ENCODE measurements at regions of chr5 and their contacts with region 1.

Region 1: DNA sequence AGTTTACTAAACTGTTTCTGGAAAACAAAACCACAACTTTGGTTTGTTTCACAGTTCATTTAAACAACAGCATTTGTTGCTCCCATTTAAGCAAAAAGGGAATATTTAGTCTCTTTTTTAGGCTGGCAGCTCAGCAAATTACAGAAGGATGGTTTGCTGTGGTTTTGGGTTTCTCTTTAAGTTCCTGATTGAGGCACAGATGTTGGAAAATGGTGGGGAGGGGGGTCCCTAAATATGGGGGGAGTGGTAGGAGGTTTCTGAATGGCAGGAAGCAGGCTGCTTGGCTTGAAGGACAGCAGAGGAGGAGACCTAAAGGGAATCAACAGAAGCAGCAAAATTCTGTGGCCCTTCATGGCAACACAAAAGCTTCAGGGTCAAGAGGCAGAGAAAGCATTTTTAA is 263.4 kb downstream of the ZSWIM6 start:
- DNase-seq: no peak
- H3K4me3 ChIP-seq: no peak overlapping the region
- H3K27ac ChIP-seq: no peak overlapping the region
- H3K4me1 ChIP-seq: 0 out of 2 replicates have a peak, but pooled peaks cover 7% of the 10 kb centered on the region
- H3K27me3 ChIP-seq: no peaks in the 10 kb centered on the region; the same call in 1 of the 2 replicates
- CTCF ChIP-seq: no peak

Region 2: GRCh38 chr5:61647672-61648071 is 52.2 kb after region 1 on chr5:
- CTCF ChIA-PET with region 1: no interaction called
- POLR2A ChIA-PET with region 1: interaction called, 14 read pairs
- intact Hi-C with region 1: no loop called
- DNase-seq: no peak
- H3K4me3 ChIP-seq: no peak overlapping the region
- H3K27ac ChIP-seq: no peak overlapping the region
- H3K4me1 ChIP-seq: no peaks in the 10 kb centered on the region
- H3K27me3 ChIP-seq: peaks cover 22% of the 10 kb centered on the region
- CTCF ChIP-seq: no peak

Region 3: DNA sequence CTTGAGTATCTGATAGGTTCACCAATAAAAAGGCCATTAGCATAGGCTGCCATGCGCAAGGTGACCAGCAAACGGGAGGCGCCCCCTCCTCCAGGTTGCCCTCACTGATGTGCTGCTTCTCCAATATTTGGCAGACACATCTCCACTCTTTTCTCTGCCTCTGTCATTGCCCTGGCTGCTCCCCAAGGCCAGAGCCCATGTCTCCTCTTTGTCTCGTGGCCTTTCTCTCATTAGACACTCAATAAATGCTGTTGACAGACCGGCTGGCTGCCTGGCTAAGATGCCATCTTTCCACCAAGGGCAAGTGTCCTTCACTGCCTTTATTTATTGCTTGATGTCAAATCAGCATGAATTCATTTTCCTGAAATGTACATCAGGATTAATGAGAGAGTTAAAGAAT is 306.6 kb after region 1 on chr5:
- CTCF ChIA-PET with region 1: no interaction called
- POLR2A ChIA-PET with region 1: no interaction called
- intact Hi-C with region 1: no loop called
- DNase-seq: no peak
- H3K4me3 ChIP-seq: no peak overlapping the region
- H3K27ac ChIP-seq: no peak overlapping the region
- H3K4me1 ChIP-seq: no peaks in the 10 kb centered on the region
- H3K27me3 ChIP-seq: no peaks in the 10 kb centered on the region
- CTCF ChIP-seq: no peak

Region 4: GRCh38 chr5:61981886-61982285 is 386.5 kb after region 1 on chr5:
- CTCF ChIA-PET with region 1: no interaction called
- POLR2A ChIA-PET with region 1: interaction called, 11 read pairs
- intact Hi-C with region 1: no loop called
- DNase-seq: no peak
- H3K4me3 ChIP-seq: no peak overlapping the region
- H3K27ac ChIP-seq: no peak overlapping the region
- H3K4me1 ChIP-seq: no peaks in the 10 kb centered on the region
- H3K27me3 ChIP-seq: peaks cover 14% of the 10 kb centered on the region; the same call in 1 of the 2 replicates
- CTCF ChIP-seq: no peak

Region 5: DNA sequence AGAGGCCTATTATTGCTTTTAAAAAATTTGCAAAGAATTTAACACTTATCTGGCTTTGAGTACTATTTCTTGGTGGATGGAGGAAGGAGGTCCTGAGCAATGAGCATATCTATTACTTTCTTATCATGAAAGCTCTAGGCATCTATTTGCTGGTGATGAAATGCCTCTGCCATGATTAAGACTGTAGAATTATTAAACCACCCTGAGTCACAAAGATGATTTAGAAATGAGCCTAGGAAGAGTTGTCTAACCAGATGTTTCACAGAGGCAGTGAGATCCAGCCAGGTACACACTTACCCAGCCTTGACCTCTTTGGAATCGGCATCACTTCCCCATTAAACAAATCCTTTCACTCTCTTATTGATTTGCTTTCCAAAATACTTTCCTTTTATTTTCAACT is 406.2 kb after region 1 on chr5:
- CTCF ChIA-PET with region 1: no interaction called
- POLR2A ChIA-PET with region 1: no interaction called
- intact Hi-C with region 1: no loop called
- DNase-seq: no peak
- H3K4me3 ChIP-seq: no peak overlapping the region
- H3K27ac ChIP-seq: no peak overlapping the region
- H3K4me1 ChIP-seq: no peaks in the 10 kb centered on the region
- H3K27me3 ChIP-seq: peaks cover 11% of the 10 kb centered on the region
- CTCF ChIP-seq: no peak

Measured in PC-9 (cell line).